ENCODE measurements at regions of chr12 and their contacts with region 1.

Region 1: DNA sequence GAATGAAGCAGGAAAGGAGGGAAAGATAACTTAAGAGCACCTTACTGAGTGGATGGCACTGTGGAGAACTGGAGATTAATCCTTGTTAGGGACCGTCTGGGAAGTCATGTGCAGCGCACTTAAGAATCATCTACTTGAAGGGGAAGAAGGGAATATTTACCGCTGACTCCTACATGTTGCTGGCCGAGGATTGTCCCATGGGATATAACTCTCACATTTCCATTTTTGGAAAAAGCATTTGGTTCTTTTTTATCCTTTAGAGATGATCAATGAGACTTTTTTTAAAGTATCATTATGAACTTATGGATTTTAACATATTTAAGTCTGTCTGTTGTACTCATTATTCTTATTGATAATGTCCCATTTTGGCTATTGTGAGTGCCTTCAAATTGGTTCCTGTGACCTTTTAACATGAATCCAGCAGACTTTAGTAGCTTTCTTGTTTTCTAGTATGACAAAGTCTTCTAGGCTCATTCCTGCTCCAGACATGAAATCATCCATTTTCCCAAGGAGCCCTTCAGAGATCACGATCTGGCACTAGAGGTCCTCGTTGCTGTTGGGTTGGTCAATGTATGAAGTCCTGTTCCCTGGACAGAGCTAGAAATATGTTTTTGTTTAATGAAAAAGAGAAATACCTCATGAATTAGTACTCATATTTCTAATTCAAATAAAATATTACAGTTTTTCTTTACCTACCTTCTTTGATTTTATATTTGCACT is 20.2 kb upstream of the FAM234B start:
- DNase-seq: peak in 1 of 2 donors; percentile 66
- H3K4me3 ChIP-seq: no peak overlapping the region
- H3K27ac ChIP-seq: no peak overlapping the region
- H3K4me1 ChIP-seq: peaks cover 0 to 7% (median 0%) of the 10 kb centered on the region in 4 donors
- H3K27me3 ChIP-seq: no peaks in the 10 kb centered on the region
- CTCF ChIP-seq: peak; percentile 39 to 41

Region 2: GRCh38 chr12:11361151-11361550 is 1662.8 kb before region 1 on chr12:
- intact Hi-C with region 1: loop called (anchors 5 kb)
- DNase-seq: no peak
- H3K4me3 ChIP-seq: no peak overlapping the region
- H3K27ac ChIP-seq: no peak overlapping the region
- H3K4me1 ChIP-seq: no peaks in the 10 kb centered on the region
- H3K27me3 ChIP-seq: no peaks in the 10 kb centered on the region
- CTCF ChIP-seq: no peak